Ascending aorta (tissue), 2 donors: ENCODE measurements at regions of chr10 and their contacts with region 1.

Region 1: DNA sequence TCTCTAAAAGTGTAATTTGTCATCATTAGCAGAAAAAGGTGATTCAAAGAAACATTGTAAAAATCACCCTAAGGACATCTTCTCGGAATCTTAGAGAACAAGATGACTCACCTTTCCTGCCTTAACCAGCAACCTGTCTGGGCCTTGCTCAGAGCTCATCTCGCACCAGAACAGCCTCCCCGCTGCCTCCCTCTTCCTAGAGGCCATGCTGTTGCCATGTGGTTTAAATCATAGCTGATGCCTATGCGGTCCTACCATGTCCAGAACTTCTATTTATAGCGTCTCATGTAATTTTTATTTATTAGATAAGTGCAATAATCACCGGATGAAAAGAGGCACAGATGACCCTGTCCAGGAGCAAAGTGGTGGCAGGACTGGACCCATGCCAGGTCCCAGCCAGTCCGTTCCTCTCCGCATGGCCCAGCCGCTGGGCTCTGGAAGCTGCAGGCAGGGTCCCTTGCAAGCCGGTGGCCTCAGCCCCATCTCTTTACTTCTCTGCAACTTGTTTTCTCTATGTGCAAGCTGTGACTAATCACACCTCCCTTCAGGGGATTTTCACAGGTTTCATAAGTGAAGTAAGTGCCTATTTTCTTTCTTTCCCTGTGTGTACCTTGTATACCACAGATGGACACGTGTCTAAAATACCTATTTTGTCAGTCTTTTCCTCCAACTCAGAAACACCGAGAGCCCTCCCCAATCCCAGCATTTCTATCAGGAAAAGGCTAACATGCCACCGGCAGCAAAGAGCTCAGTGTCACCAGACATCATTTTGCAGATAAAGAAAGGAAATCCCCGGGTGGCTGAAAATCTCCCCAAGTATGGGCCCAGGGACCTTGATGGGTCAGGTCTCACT is 27.1 kb downstream of the KLF6 start:
- DNase-seq: peak in 1 of 2 donors; percentile 61
- H3K4me3 ChIP-seq: no peak overlapping the region
- H3K27ac ChIP-seq: no peak overlapping the region
- H3K4me1 ChIP-seq: peaks cover 5 to 21% of the 10 kb centered on the region in 2 donors
- H3K27me3 ChIP-seq: no peaks in the 10 kb centered on the region
- CTCF ChIP-seq: no peak

Region 2: DNA sequence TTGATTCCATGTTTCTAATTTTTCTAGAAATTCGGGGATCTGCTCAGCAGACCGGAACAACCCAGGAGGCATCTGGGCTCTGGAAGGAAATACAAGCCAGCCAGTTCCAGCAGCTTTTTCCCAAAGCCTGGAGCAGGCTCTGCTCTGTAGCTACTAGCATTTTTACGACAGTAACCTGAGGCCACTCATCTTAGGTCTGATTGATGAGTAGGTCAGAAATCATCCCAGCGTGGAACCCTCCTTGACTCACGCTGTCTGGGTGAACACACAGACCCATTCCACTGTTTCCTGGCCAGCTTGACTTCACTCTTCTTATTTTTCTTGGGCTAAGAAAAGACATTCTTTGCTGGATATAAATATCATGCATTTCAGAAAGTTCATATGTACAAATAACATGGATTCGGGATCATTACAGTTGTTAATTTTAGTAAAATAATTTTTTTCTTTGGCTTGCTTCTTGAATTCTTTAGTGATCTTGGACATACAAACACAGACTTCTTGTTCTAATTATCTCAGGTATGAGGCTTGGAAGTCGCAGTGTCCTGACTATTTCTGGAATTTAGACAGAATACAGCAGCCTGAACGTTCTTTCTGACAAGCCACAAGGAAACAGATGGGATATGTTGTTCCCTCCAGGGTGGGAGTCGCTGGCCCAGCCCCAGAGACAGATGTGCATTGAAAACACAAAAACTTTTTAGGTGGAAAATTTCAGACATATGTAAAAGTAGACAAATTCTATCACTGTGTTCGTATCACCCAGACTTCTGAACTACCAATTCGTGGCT is 530.7 kb before region 1 on chr10:
- intact Hi-C with region 1: loop called (anchors 5 kb)
- DNase-seq: no peak
- H3K4me3 ChIP-seq: peak overlapping the region in 1 of 2 donors; percentile 7
- H3K27ac ChIP-seq: peak overlapping the region; percentile 44 to 60
- H3K4me1 ChIP-seq: peaks cover 0 to 21% of the 10 kb centered on the region in 2 donors
- H3K27me3 ChIP-seq: no peaks in the 10 kb centered on the region
- CTCF ChIP-seq: no peak

Region 3: DNA sequence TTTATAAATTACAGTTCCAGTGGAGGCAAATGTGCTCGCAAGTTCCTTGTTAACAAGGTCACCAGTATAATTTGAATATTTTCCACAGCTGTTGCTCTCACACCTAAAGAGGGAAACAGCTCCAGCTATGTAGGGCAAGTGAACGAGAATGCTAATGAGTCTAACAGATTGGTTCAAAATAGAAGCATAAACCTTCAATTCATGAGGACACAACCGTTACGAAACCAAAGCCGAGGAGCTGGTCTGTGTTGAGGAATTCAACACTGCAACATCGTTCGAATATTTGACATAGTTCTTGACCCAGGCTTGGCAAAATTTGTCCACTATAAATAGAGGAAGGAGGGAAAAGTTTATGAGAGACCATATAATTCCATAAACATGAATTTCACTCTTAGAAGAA is 134.1 kb before region 1 on chr10:
- intact Hi-C with region 1: loop called (anchors 5 kb)
- DNase-seq: peak in 1 of 2 donors; percentile 75
- H3K4me3 ChIP-seq: peak overlapping the region in 1 of 2 donors; percentile 42
- H3K27ac ChIP-seq: peak overlapping the region; percentile 50 to 67
- H3K4me1 ChIP-seq: peaks cover 3 to 12% of the 10 kb centered on the region in 2 donors
- H3K27me3 ChIP-seq: no peaks in the 10 kb centered on the region
- CTCF ChIP-seq: no peak

Region 4: GRCh38 chr10:3776796-3777571 is 19.1 kb after region 1 on chr10:
- intact Hi-C with region 1: loop called (anchors 2 kb)
- DNase-seq: peak; percentile 53 to 92
- H3K4me3 ChIP-seq: peak overlapping the region; percentile 79 to 99
- H3K27ac ChIP-seq: peak overlapping the region; percentile 92 to 97
- H3K4me1 ChIP-seq: peaks cover 21 to 45% of the 10 kb centered on the region in 2 donors
- H3K27me3 ChIP-seq: no peaks in the 10 kb centered on the region
- CTCF ChIP-seq: no peak